Naive thymus-derived CD4-positive, alpha-beta T cell (primary cell): ENCODE measurements at regions of chr19 and their contacts with region 1.

Region 1: GRCh38 chr19:52397310-52398080 is at the start of gene ZNF528:
- DNase-seq: peak; percentile 78 to 95 (median 87)
- ATAC-seq: peak; percentile 98
- H3K4me3 ChIP-seq: peak within 1 kb of the TSS; percentile 94
- H3K4me3 Mint-ChIP-seq: peak within 1 kb of the TSS; percentile 80 to 93 (median 90)
- H3K27ac ChIP-seq: peak within 1 kb of the TSS; percentile 65
- H3K27ac Mint-ChIP-seq: peak within 1 kb of the TSS; percentile 88 to 96 (median 91)
- H3K4me1 ChIP-seq: peaks cover 5 to 12% of the 10 kb centered on the region in 2 donors
- H3K4me1 Mint-ChIP-seq: peaks cover 15 to 34% (median 25%) of the 10 kb centered on the region in 7 donors
- H3K27me3 ChIP-seq: no peaks in the 10 kb centered on the region
- H3K27me3 Mint-ChIP-seq: no peaks in the 10 kb centered on the region
- total RNA-seq, gene ZNF528: 10.6 to 47.3 (median 23.0) TPM

Region 2: DNA sequence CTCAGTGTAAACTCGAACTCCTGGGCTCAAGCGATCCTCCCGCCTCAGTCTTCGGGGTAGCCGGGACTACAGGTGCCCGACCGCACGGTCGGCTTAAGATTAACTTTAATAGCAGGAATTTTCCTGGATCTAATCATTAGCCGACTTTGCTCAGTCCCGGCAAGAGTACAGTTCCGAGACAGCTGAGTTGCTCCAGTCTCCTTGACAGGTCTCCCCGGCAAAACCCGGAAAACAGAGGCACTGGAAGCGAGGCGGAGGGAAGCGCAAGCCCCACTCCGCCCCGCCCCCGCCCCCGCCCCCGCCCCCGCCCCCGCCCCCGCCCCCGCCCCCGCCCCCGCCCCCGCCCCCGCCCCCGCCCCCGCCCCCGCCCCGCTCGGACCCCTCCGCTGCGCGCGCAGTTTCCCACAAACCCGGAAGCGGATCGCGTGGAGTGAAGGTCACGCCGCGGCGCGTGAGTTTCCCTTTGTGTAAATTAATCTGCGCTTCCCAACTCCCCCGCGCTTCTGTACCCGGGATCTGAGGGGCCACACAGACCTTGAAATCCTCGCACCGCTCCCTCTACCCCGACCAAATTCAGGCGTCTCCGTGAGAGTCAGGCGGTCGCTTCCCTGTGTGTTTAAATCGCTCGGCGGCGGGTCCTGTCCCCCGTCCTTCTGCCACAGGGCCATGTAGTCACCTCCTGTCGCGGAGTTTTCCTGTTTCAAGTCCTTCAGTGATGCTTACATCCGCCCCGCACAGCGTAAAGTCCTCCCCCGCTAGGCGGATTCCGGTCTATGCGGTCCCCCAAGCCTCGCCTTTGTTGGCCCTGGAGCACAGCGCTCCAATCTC is 100.5 kb before region 1 on chr19 and contains the start of gene ZNF480:
- CTCF ChIA-PET with region 1: no interaction called
- POLR2A ChIA-PET with region 1: no interaction called
- intact Hi-C with region 1: loop called (anchors 1 to 10 kb)
- DNase-seq: peak; percentile 67 to 91 (median 87)
- ATAC-seq: peak; percentile 89
- H3K4me3 ChIP-seq: peak within 1 kb of the TSS; percentile 85
- H3K4me3 Mint-ChIP-seq: peak within 1 kb of the TSS; percentile 89 to 99 (median 98)
- H3K27ac ChIP-seq: peak within 1 kb of the TSS; percentile 97
- H3K27ac Mint-ChIP-seq: peak within 1 kb of the TSS; percentile 95 to 99 (median 98)
- H3K4me1 ChIP-seq: peaks cover 4 to 5% of the 10 kb centered on the region in 2 donors
- H3K4me1 Mint-ChIP-seq: peaks cover 15 to 32% (median 19%) of the 10 kb centered on the region in 7 donors
- H3K27me3 ChIP-seq: no peaks in the 10 kb centered on the region
- H3K27me3 Mint-ChIP-seq: peaks cover 0 to 3% (median 0%) of the 10 kb centered on the region in 5 donors
- total RNA-seq, gene ZNF480: 8.5 to 28.9 (median 13.3) TPM

Region 3: DNA sequence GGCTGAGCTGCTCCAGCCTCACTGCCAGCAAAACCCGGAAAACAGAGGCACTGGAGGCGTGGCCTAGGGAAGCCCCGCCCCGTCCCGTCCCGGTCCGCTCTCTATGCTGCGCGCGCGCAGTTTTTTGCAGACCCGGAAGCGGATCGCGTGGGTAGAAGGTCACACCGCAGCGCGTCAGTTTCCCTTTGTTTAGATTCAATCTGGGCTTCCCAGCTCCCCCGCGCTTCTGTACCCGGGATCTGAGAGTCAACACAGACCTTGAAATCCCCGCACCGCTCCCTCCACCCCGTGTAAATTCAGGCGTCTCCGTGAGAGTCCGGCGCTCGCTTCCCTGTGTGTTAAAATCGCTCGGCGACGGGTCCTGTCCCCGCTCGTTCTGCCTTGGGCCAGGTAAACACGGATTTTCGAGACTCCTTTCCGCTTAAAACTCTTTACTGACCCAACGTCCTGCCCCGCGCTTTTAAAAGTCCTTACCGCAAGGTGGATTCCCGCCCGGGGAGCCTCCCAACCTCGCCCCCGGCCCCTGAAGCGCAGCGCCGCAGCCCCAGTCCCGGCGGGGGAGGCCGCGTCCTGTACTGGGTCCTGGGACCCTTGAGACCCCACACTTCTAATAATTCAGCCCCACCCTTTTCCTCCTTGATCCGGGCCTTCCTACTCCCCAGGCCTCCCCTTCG is 61.2 kb before region 1 on chr19 and contains the start of gene ZNF610:
- CTCF ChIA-PET with region 1: no interaction called
- POLR2A ChIA-PET with region 1: no interaction called
- intact Hi-C with region 1: loop called in 1 of 2 experiments (anchors 1 kb)
- DNase-seq: peak; percentile 73 to 88 (median 85)
- ATAC-seq: peak; percentile 99
- H3K4me3 ChIP-seq: peak within 1 kb of the TSS; percentile 88
- H3K4me3 Mint-ChIP-seq: peak within 1 kb of the TSS; percentile 87 to 97 (median 93)
- H3K27ac ChIP-seq: peak within 1 kb of the TSS; percentile 83
- H3K27ac Mint-ChIP-seq: peak within 1 kb of the TSS; percentile 81 to 98 (median 96)
- H3K4me1 ChIP-seq: peaks cover 0 to 6% of the 10 kb centered on the region in 2 donors
- H3K4me1 Mint-ChIP-seq: peaks cover 11 to 19% (median 16%) of the 10 kb centered on the region in 7 donors
- H3K27me3 ChIP-seq: no peaks in the 10 kb centered on the region
- H3K27me3 Mint-ChIP-seq: no peaks in the 10 kb centered on the region
- total RNA-seq, gene ZNF610: 0.42 to 4.3 (median 0.93) TPM

Region 4: DNA sequence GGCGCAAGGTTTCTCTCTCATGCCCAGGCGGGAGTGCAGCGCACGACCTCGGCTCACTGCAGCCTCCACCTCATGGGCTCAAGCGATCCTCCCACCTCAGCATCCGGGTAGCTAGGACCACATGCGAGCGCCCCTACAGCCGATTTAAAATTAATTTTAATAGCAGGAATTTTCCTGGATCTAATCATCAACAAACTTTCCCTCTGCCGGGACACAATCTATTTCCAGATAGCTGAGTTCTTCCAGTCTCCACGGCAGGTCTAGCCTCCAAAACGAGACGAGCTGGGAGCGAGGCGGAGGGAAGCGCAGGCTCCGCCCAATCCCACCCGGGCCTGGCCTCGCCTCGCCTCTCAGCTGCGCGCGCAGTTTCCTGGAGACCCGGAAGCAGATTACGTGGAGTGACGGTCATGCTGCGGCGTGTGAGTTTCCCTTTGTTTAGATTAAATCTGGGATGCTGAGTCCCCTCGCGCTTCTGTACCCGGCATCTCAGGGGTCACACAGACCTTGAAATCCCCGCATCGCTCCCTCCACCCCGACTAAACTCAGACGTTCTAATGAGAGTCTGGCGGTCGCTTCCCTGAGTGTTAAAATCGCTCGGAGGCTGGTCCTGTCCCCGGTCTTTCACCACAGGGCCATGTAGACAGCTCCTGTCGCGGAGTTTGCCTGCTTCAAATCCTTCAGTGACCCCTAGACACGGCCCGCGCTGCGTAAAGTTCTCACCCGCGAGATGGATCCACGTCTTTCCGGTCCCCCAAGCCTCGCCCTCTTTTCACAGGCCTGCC is 27.7 kb before region 1 on chr19 and contains the start of gene ZNF880:
- CTCF ChIA-PET with region 1: no interaction called
- POLR2A ChIA-PET with region 1: interaction called, 5 read pairs
- intact Hi-C with region 1: loop called (anchors 1 kb)
- DNase-seq: peak; percentile 81 to 92 (median 88)
- ATAC-seq: peak; percentile 97
- H3K4me3 ChIP-seq: peak within 1 kb of the TSS; percentile 100
- H3K4me3 Mint-ChIP-seq: peak within 1 kb of the TSS; percentile 90 to 98 (median 94)
- H3K27ac ChIP-seq: peak within 1 kb of the TSS; percentile 92
- H3K27ac Mint-ChIP-seq: peak within 1 kb of the TSS; percentile 96 to 99 (median 98)
- H3K4me1 ChIP-seq: peaks cover 4 to 5% of the 10 kb centered on the region in 2 donors
- H3K4me1 Mint-ChIP-seq: peaks cover 2 to 19% (median 17%) of the 10 kb centered on the region in 7 donors
- H3K27me3 ChIP-seq: no peaks in the 10 kb centered on the region
- H3K27me3 Mint-ChIP-seq: no peaks in the 10 kb centered on the region
- total RNA-seq, gene ZNF880: 10.3 to 33.5 (median 25.4) TPM

Region 5: GRCh38 chr19:52453324-52454094 is 56.0 kb after region 1 on chr19 and contains the start of gene ZNF578:
- CTCF ChIA-PET with region 1: no interaction called
- POLR2A ChIA-PET with region 1: interaction called, 4 read pairs
- intact Hi-C with region 1: loop called in 1 of 2 experiments (anchors 1 kb)
- DNase-seq: peak; percentile 18 to 78 (median 59)
- ATAC-seq: peak; percentile 81
- H3K4me3 ChIP-seq: peak within 1 kb of the TSS; percentile 56
- H3K4me3 Mint-ChIP-seq: peak within 1 kb of the TSS; percentile 72 to 93 (median 89)
- H3K27ac ChIP-seq: no peak within 1 kb of the TSS
- H3K27ac Mint-ChIP-seq: peak within 1 kb of the TSS in 8 of 9 donors; percentile 47 to 83 (median 66)
- H3K4me1 ChIP-seq: peaks cover 0 to 7% of the 10 kb centered on the region in 2 donors
- H3K4me1 Mint-ChIP-seq: peaks cover 3 to 35% (median 21%) of the 10 kb centered on the region in 7 donors
- H3K27me3 ChIP-seq: no peaks in the 10 kb centered on the region
- H3K27me3 Mint-ChIP-seq: peaks cover 0 to 21% (median 16%) of the 10 kb centered on the region in 5 donors
- total RNA-seq, gene ZNF578: 0.75 to 3.9 (median 1.5) TPM

Region 6: GRCh38 chr19:52570000-52570861 is 172.7 kb after region 1 on chr19 and contains the start of gene ZNF701:
- CTCF ChIA-PET with region 1: no interaction called
- POLR2A ChIA-PET with region 1: no interaction called
- intact Hi-C with region 1: loop called in 1 of 2 experiments (anchors 2 kb)
- DNase-seq: peak; percentile 92 to 99 (median 96)
- ATAC-seq: peak; percentile 100
- H3K4me3 ChIP-seq: peak within 1 kb of the TSS; percentile 78
- H3K4me3 Mint-ChIP-seq: peak within 1 kb of the TSS; percentile 88 to 99 (median 94)
- H3K27ac ChIP-seq: peak within 1 kb of the TSS; percentile 78
- H3K27ac Mint-ChIP-seq: peak within 1 kb of the TSS; percentile 92 to 98 (median 95)
- H3K4me1 ChIP-seq: peaks cover 10 to 13% of the 10 kb centered on the region in 2 donors
- H3K4me1 Mint-ChIP-seq: peaks cover 9 to 42% (median 37%) of the 10 kb centered on the region in 7 donors
- H3K27me3 ChIP-seq: no peaks in the 10 kb centered on the region
- H3K27me3 Mint-ChIP-seq: no peaks in the 10 kb centered on the region
- total RNA-seq, gene ZNF701: 11.7 to 43.3 (median 28.3) TPM

Region 7: DNA sequence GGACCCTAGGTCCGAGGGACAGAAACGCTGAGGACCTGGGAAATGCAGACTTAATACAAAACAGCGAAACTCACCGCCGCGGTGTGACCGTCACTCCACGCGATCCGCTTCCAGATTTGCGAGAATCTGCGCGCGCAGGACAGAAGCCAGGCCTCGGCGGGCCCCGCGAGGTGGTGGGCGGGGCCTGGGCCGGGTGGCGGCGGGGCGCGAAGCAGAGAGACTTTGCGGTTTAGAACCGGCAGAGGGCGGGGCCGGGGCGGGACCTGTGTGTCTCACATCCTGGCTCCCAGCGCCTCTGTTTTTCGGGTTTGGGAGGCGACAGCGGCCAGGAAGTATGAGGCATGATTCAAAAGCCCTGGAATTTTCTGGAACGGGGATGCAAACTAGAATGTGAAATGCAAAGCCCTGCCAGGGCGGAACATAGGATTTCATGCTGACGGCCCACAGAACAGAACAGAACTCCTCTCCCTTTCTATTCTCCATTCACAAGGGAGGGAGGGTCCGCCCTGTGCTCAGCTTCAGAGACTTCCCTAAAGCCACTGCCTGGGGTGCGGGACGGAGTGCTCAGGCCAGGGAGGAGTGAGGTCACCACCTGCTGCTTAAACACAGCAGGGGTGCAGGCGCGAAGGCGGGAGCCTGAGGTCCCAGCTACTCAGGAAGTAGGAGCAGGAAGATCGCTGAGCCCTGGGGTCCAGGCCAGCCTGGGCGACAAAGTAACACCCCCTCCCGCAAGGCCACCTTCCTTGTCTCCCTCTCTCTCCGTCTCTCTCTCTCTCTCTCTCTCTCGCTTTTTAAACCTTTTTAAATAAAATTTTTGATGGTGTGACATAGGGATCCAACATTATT is 293.1 kb after region 1 on chr19:
- CTCF ChIA-PET with region 1: no interaction called
- POLR2A ChIA-PET with region 1: no interaction called
- intact Hi-C with region 1: loop called in 1 of 2 experiments (anchors 1 kb)
- DNase-seq: peak; percentile 81 to 91 (median 87)
- ATAC-seq: peak; percentile 99
- H3K4me3 ChIP-seq: peak overlapping the region; percentile 80
- H3K4me3 Mint-ChIP-seq: peak overlapping the region; percentile 92 to 99 (median 96)
- H3K27ac ChIP-seq: peak overlapping the region; percentile 85
- H3K27ac Mint-ChIP-seq: peak overlapping the region; percentile 89 to 97 (median 94)
- H3K4me1 ChIP-seq: peaks cover 6 to 9% of the 10 kb centered on the region in 2 donors
- H3K4me1 Mint-ChIP-seq: peaks cover 18 to 33% (median 30%) of the 10 kb centered on the region in 7 donors
- H3K27me3 ChIP-seq: no peaks in the 10 kb centered on the region
- H3K27me3 Mint-ChIP-seq: no peaks in the 10 kb centered on the region